ENCODE measurements at regions of chr10 and their contacts with region 1.

Region 1: DNA sequence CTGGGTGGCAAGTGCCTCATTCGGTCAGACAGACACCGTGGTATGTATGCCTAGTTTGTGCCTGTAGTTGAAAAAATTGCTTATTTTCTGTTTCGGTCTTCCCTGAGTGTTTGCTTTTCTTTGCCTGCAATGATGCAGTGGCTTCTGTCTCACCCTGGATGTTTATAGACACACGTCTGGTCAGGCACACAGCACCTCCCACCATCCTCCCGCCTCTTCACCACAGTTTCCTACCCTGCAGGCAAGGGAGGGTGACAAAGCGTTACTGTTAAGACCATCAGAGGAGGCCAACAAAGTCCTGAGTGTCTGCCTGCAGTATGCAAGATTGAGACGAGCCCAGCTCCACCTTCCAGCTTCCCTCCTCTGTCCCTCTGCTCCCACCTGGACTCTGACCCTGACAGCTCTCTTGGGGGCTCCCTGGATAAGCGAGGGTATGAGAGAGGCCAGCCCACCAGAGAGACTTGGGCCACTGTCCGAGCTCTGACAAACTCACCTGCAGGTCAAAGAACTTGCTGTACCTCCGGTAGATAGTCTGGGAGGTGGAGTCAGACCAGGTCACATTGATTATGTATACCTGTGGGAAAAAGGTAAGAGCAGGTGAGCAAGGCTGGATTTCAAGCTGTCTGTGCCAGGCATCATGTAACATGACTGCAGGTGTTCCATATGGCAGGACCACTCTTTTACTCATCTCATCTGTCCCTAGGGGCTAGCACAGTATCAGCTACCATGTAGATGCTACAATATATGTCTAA is 54.4 kb downstream of the SH3PXD2A start:
- DNase-seq: peak; percentile 8 to 77 (median 50)
- ATAC-seq: peak; percentile 82
- H3K4me3 ChIP-seq: no peak overlapping the region
- H3K4me3 Mint-ChIP-seq: no peak overlapping the region
- H3K27ac ChIP-seq: peak overlapping the region in 1 of 2 experiments; percentile 73
- H3K27ac Mint-ChIP-seq: peak overlapping the region; percentile 17
- H3K4me1 ChIP-seq: peaks cover 9% of the 10 kb centered on the region
- H3K4me1 Mint-ChIP-seq: peaks cover 24% of the 10 kb centered on the region
- H3K27me3 ChIP-seq: no peaks in the 10 kb centered on the region
- H3K27me3 Mint-ChIP-seq: no peaks in the 10 kb centered on the region
- CTCF ChIP-seq: no peak

Region 2: GRCh38 chr10:103845972-103846371 is 45.0 kb after region 1 on chr10:
- CTCF ChIA-PET with region 1: no interaction called
- POLR2A ChIA-PET with region 1: no interaction called
- intact Hi-C with region 1: loop called in 1 of 2 experiments (anchors 5 kb)
- DNase-seq: peak in 7 of 9 experiments; percentile 17 to 62 (median 35)
- ATAC-seq: peak; percentile 91
- H3K4me3 ChIP-seq: no peak overlapping the region
- H3K4me3 Mint-ChIP-seq: peak overlapping the region; percentile 42
- H3K27ac ChIP-seq: no peak overlapping the region
- H3K27ac Mint-ChIP-seq: peak overlapping the region; percentile 45
- H3K4me1 ChIP-seq: peaks cover 15% of the 10 kb centered on the region
- H3K4me1 Mint-ChIP-seq: peaks cover 19% of the 10 kb centered on the region
- H3K27me3 ChIP-seq: no peaks in the 10 kb centered on the region
- H3K27me3 Mint-ChIP-seq: no peaks in the 10 kb centered on the region
- CTCF ChIP-seq: no peak